ENCODE measurements at regions of chr2 and their contacts with region 1.

Region 1: GRCh38 chr2:206260188-206261012 is 14.1 kb upstream of the ZDBF2 start:
- DNase-seq: peak; percentile 44
- H3K4me3 Mint-ChIP-seq: no peak overlapping the region
- H3K27ac Mint-ChIP-seq: peak overlapping the region; percentile 65
- H3K4me1 Mint-ChIP-seq: peaks cover 15% of the 10 kb centered on the region
- H3K27me3 Mint-ChIP-seq: peaks cover 11% of the 10 kb centered on the region
- CTCF ChIP-seq: peak; percentile 45

Region 2: GRCh38 chr2:206230060-206230762 is 30.2 kb before region 1 on chr2:
- CTCF ChIA-PET with region 1: interaction called, 14 read pairs
- POLR2A ChIA-PET with region 1: interaction called, 5 read pairs
- intact Hi-C with region 1: no loop called
- DNase-seq: peak; percentile 87
- H3K4me3 Mint-ChIP-seq: no peak overlapping the region
- H3K27ac Mint-ChIP-seq: peak overlapping the region; percentile 2
- H3K4me1 Mint-ChIP-seq: peaks cover 17% of the 10 kb centered on the region
- H3K27me3 Mint-ChIP-seq: no peaks in the 10 kb centered on the region
- CTCF ChIP-seq: no peak